CD4-positive, alpha-beta memory T cell (primary cell): ENCODE measurements at regions of chr2 and their contacts with region 1.

Region 1: DNA sequence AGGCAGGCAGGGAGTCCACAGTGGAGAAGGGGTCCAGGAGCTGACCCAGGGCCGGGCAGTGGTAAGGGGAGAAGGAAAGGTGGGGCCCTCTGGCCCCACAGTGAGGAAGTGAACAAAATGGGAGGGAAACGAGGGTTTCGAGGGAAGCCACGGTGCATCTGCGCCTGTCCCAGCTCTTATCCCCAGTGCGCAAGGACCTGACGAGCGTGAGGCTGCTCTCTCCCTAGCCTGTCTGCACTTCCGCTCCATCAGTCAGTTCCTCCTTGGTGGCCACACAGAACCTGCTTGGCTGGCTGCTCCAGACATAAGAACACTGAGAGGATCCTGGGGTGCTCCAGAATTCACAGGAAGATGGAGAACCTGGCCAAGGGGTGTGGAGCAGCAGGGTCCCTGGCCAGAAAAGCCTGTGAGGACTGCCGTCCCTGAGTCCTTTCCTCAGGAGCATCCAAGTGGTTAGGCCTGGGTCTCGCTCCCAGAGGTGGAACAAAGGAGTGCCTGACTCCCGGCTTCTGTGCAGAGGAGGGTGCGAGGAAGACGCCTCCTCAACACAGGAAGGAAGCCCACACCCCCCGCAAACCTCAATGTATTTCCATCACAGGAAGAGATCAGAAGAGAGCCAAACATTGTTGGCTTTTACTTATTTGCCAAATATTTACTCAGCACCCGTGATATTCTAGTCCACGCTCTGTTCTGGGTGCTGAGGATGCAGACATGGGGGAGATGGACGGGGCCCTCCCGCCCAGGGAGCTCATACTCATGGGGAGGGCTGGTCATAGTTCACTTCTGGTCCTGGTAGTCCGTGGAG is 43.7 kb upstream of the SEMA4C start:
- DNase-seq: peak; percentile 62 to 76 (median 67)
- H3K4me3 ChIP-seq: peak overlapping the region; percentile 57 to 76
- H3K4me3 Mint-ChIP-seq: peak overlapping the region; percentile 83 to 93 (median 88)
- H3K27ac ChIP-seq: peak overlapping the region; percentile 54
- H3K27ac Mint-ChIP-seq: peak overlapping the region; percentile 81 to 98 (median 97)
- H3K4me1 ChIP-seq: peaks cover 64% of the 10 kb centered on the region
- H3K4me1 Mint-ChIP-seq: peaks cover 45 to 85% (median 70%) of the 10 kb centered on the region in 4 donors
- H3K27me3 ChIP-seq: no peaks in the 10 kb centered on the region
- H3K27me3 Mint-ChIP-seq: no peaks in the 10 kb centered on the region

Region 2: DNA sequence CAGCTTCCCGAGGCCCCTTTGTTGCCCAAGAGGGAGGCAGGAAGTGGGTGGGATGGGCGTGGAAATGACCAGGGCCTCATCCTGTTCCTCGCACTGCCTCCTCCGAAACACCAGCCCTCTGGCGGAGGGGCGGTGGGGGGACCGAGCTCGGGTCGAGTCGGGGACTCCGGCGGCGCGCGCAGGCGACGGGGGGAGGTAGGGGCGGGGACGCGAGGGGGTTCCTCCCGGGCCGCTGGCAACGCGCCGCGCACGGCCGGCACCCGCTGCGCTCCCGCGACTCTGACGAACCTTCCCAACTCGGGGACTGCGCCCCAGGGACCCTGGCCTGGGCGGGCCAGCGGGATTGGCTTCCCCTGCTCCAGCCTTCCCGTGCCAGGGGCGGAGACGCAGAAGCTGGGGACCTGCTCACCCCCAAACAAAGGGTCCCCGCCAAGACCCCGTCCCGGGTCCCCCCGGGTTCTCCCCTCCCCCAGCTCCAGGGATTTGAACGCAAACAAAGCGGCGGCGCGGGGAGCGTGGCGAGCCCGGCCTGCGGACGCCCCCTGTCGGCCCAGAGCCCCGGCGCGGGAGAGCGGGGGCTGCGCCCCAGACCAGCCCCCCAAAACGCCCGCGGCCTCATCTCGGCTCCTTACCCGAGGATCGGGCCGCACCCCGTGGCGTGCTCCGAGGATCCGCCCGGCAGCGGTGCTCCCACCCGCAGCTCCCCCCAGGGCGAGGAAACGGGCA is 44.9 kb before region 1 on chr2:
- CTCF ChIA-PET with region 1: interaction called, 10 read pairs
- POLR2A ChIA-PET with region 1: interaction called, 121 read pairs
- intact Hi-C with region 1: loop called (anchors 1 kb)
- DNase-seq: peak; percentile 50 to 72 (median 52)
- H3K4me3 ChIP-seq: peak overlapping the region; percentile 47 to 72
- H3K4me3 Mint-ChIP-seq: peak overlapping the region; percentile 69 to 91 (median 88)
- H3K27ac ChIP-seq: peak overlapping the region; percentile 68
- H3K27ac Mint-ChIP-seq: peak overlapping the region in 6 of 7 donors; percentile 79 to 94 (median 92)
- H3K4me1 ChIP-seq: peaks cover 39% of the 10 kb centered on the region
- H3K4me1 Mint-ChIP-seq: peaks cover 27 to 58% (median 42%) of the 10 kb centered on the region in 4 donors
- H3K27me3 ChIP-seq: no peaks in the 10 kb centered on the region
- H3K27me3 Mint-ChIP-seq: no peaks in the 10 kb centered on the region

Region 3: GRCh38 chr2:96895726-96896651 is 17.6 kb before region 1 on chr2:
- CTCF ChIA-PET with region 1: interaction called, 4 read pairs
- POLR2A ChIA-PET with region 1: interaction called, 50 read pairs
- intact Hi-C with region 1: no loop called
- DNase-seq: no peak
- H3K4me3 ChIP-seq: no peak overlapping the region
- H3K4me3 Mint-ChIP-seq: peak overlapping the region in 4 of 8 donors; percentile 36 to 64 (median 41)
- H3K27ac ChIP-seq: no peak overlapping the region
- H3K27ac Mint-ChIP-seq: peak overlapping the region; percentile 42 to 92 (median 79)
- H3K4me1 ChIP-seq: peaks cover 47% of the 10 kb centered on the region
- H3K4me1 Mint-ChIP-seq: peaks cover 34 to 63% (median 46%) of the 10 kb centered on the region in 4 donors
- H3K27me3 ChIP-seq: no peaks in the 10 kb centered on the region
- H3K27me3 Mint-ChIP-seq: no peaks in the 10 kb centered on the region

Region 4: GRCh38 chr2:96927405-96928243 is 14.0 kb after region 1 on chr2:
- CTCF ChIA-PET with region 1: interaction called, 6 read pairs
- POLR2A ChIA-PET with region 1: interaction called, 46 read pairs
- intact Hi-C with region 1: no loop called
- DNase-seq: no peak
- H3K4me3 ChIP-seq: no peak overlapping the region
- H3K4me3 Mint-ChIP-seq: no peak overlapping the region
- H3K27ac ChIP-seq: no peak overlapping the region
- H3K27ac Mint-ChIP-seq: no peak overlapping the region
- H3K4me1 ChIP-seq: peaks cover 27% of the 10 kb centered on the region
- H3K4me1 Mint-ChIP-seq: peaks cover 17 to 40% (median 24%) of the 10 kb centered on the region in 4 donors
- H3K27me3 ChIP-seq: no peaks in the 10 kb centered on the region
- H3K27me3 Mint-ChIP-seq: peaks cover 0 to 1% of the 10 kb centered on the region in 2 donors

Region 5: GRCh38 chr2:96951093-96951654 is 37.6 kb after region 1 on chr2:
- CTCF ChIA-PET with region 1: interaction called, 22 read pairs
- POLR2A ChIA-PET with region 1: interaction called, 11 read pairs
- intact Hi-C with region 1: no loop called
- DNase-seq: peak; percentile 68 to 79 (median 78)
- H3K4me3 ChIP-seq: no peak overlapping the region
- H3K4me3 Mint-ChIP-seq: peak overlapping the region in 3 of 8 donors; percentile 1 to 37 (median 24)
- H3K27ac ChIP-seq: no peak overlapping the region
- H3K27ac Mint-ChIP-seq: peak overlapping the region in 1 of 7 donors; percentile 61
- H3K4me1 ChIP-seq: peaks cover 28% of the 10 kb centered on the region
- H3K4me1 Mint-ChIP-seq: peaks cover 16 to 34% (median 26%) of the 10 kb centered on the region in 4 donors
- H3K27me3 ChIP-seq: no peaks in the 10 kb centered on the region
- H3K27me3 Mint-ChIP-seq: no peaks in the 10 kb centered on the region

Region 6: DNA sequence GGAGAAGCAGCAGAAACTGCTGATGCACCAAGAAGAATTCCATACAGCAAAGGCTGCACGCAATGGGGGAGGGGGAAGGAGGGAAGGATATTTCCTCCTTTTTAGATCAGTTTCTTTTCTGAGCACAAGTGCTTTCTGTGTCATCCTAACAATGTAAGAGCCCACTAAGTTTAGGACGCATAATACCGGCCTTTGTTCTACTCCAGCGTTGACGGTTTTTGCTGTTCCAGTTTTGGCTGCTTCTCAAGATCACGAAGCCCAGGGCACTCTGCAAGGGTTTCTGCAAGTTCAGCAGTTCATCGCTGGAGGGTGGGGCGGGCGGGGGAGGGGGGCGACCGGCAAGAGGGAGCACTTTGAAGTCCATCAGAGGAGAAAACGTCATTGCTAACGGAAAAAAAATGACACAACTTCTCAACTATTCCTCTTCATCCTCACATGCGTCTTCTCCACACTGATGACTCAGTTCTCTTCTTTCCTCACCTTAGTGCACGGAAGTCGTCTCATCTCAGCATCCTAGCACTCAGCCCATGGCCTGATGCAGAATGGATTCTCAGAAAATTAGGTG is 64.1 kb after region 1 on chr2:
- CTCF ChIA-PET with region 1: no interaction called
- POLR2A ChIA-PET with region 1: no interaction called
- intact Hi-C with region 1: no loop called
- DNase-seq: peak; percentile 15 to 63 (median 21)
- H3K4me3 ChIP-seq: no peak overlapping the region
- H3K4me3 Mint-ChIP-seq: peak overlapping the region in 7 of 8 donors; percentile 0 to 58 (median 19)
- H3K27ac ChIP-seq: no peak overlapping the region
- H3K27ac Mint-ChIP-seq: peak overlapping the region in 6 of 7 donors; percentile 1 to 84 (median 36)
- H3K4me1 ChIP-seq: peaks cover 8% of the 10 kb centered on the region
- H3K4me1 Mint-ChIP-seq: peaks cover 8 to 12% (median 11%) of the 10 kb centered on the region in 4 donors
- H3K27me3 ChIP-seq: no peaks in the 10 kb centered on the region
- H3K27me3 Mint-ChIP-seq: no peaks in the 10 kb centered on the region

Region 7: GRCh38 chr2:97011977-97012565 is 98.5 kb after region 1 on chr2:
- CTCF ChIA-PET with region 1: no interaction called
- POLR2A ChIA-PET with region 1: no interaction called
- intact Hi-C with region 1: no loop called
- DNase-seq: peak; percentile 37 to 59 (median 44)
- H3K4me3 ChIP-seq: no peak overlapping the region
- H3K4me3 Mint-ChIP-seq: no peak overlapping the region
- H3K27ac ChIP-seq: no peak overlapping the region
- H3K27ac Mint-ChIP-seq: no peak overlapping the region
- H3K4me1 ChIP-seq: no peaks in the 10 kb centered on the region
- H3K4me1 Mint-ChIP-seq: no peaks in the 10 kb centered on the region
- H3K27me3 ChIP-seq: no peaks in the 10 kb centered on the region
- H3K27me3 Mint-ChIP-seq: peaks cover 14 to 15% of the 10 kb centered on the region in 2 donors